A673 (cell line): ENCODE measurements at regions of chr2 and their contacts with region 1.

Region 1: GRCh38 chr2:203383038-203383437 is 54.8 kb downstream of the ABI2 start:
- DNase-seq: no peak
- H3K4me3 ChIP-seq: no peak overlapping the region
- H3K27ac ChIP-seq: no peak overlapping the region
- H3K4me1 ChIP-seq: no peaks in the 10 kb centered on the region
- H3K27me3 ChIP-seq: no peaks in the 10 kb centered on the region
- CTCF ChIP-seq: no peak

Region 2: DNA sequence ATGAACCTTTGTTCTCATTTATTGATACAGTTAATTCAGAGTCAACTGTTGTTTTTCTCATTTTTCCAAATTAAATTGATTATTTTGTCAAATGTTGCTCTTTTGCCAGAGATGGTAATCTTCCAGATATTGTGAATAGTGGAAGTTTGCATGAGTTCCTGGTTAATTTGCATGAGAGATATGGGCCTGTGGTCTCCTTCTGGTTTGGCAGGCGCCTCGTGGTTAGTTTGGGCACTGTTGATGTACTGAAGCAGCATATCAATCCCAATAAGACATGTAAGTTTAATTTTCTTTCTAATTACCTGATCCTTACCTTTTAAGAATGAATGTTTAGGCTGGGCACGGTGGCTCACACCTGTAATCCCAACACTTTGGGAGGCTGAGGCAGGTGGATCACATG is 136.4 kb before region 1 on chr2:
- CTCF ChIA-PET with region 1: no interaction called
- POLR2A ChIA-PET with region 1: interaction called, 12 read pairs
- intact Hi-C with region 1: no loop called
- DNase-seq: no peak
- H3K4me3 ChIP-seq: no peak overlapping the region
- H3K27ac ChIP-seq: no peak overlapping the region
- H3K4me1 ChIP-seq: no peaks in the 10 kb centered on the region
- H3K27me3 ChIP-seq: no peaks in the 10 kb centered on the region
- CTCF ChIP-seq: no peak

Region 3: DNA sequence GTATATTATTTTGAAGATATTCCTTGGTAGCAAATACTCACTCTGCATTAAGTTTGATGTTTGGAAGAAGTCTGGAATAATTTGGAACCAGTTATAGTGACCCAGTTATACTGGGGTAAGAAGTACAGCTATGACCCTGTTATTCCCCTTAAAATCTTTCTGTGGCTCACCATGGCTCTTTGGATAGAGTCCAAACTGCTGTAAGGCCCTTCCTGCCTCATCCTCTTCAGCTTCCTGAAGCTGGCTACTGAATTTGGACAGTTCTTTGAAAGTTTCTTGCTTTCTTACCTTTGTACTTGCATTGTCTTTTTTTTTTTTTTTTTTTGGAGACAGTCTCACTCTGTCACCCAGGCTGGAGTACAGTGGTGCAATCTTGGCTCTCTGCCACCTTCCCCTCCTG is 30.8 kb after region 1 on chr2:
- CTCF ChIA-PET with region 1: no interaction called
- POLR2A ChIA-PET with region 1: interaction called, 17 read pairs
- intact Hi-C with region 1: no loop called
- DNase-seq: no peak
- H3K4me3 ChIP-seq: no peak overlapping the region
- H3K27ac ChIP-seq: no peak overlapping the region
- H3K4me1 ChIP-seq: no peaks in the 10 kb centered on the region
- H3K27me3 ChIP-seq: no peaks in the 10 kb centered on the region
- CTCF ChIP-seq: no peak